Activated B cell treated with CpG ODN at 0.5 μM for 24 hours (primary cell): ENCODE measurements at regions of chr9 and their contacts with region 1.

Region 1: GRCh38 chr9:4762108-4762885 is 21.3 kb upstream of the AK3 start:
- DNase-seq: peak; percentile 61
- ATAC-seq: peak; percentile 70
- H3K4me3 Mint-ChIP-seq: peak overlapping the region; percentile 72
- H3K27ac Mint-ChIP-seq: peak overlapping the region; percentile 54
- H3K4me1 Mint-ChIP-seq: peaks cover 24% of the 10 kb centered on the region
- H3K27me3 Mint-ChIP-seq: no peaks in the 10 kb centered on the region
- CTCF ChIP-seq: no peak

Region 2: DNA sequence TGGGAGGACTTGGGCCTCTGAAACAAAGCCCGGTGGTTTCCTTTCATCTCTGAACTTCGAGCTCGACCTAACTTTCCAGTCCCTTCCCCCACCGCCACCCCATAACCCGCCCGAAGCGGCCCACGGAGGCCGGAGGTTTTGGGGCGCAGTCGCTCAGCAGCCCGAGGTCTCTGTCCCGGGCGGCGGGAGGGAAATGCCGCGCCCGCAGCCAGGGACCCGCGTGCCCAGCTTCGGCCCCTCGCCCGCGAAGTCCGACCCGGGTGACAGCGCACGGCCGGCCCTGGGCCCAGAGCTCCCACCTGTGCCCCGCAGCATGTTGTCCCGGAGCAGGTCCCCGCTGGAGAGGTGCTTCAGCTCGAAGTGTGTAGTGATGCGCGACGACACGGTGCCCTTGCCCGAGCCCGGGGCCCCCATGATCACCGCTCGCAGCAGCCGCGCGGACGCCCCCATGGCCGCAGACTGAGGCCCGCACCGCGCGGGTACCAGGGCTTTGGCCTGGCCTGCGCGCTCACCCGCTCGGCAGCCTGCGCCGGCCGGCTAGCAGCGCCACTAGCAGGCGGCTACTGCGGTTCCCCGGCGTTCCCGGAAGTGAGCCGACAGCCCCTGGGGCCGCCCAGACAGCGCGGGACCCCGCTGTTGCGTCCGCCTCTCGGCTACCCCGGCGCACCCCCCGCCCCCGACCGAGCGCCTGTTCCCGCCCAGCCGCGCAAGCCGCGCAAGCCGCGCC is 21.5 kb before region 1 on chr9 and contains the start of gene AK3:
- CTCF ChIA-PET with region 1: interaction called, 6 read pairs
- POLR2A ChIA-PET with region 1: interaction called, 4 read pairs
- intact Hi-C with region 1: loop called (anchors 1 kb)
- DNase-seq: peak; percentile 79
- ATAC-seq: peak; percentile 93
- H3K4me3 Mint-ChIP-seq: peak within 1 kb of the TSS; percentile 90
- H3K27ac Mint-ChIP-seq: peak within 1 kb of the TSS; percentile 83
- H3K4me1 Mint-ChIP-seq: peaks cover 30% of the 10 kb centered on the region
- H3K27me3 Mint-ChIP-seq: no peaks in the 10 kb centered on the region
- CTCF ChIP-seq: no peak
- total RNA-seq, gene AK3: 14.5 and 16.9 TPM in 2 replicates

Region 3: DNA sequence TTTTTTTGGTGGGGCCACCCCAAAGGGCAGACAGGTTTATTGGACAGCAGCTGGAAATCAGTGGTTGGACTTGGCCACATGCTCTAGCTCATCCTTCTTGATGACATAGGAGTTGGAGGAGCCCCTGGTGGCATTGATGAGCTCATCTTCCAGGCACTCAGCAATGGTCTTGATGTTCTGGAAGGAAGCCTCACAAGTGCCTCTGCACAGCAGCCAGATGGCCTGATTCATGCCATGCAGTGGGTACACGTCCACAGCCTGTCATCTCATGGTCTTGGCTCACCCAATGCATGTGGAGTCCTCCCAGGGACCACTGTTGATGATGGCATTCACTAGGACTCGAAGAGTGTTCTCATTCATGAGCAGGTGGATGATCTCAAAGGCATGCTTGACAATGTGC is 19.1 kb after region 1 on chr9:
- CTCF ChIA-PET with region 1: interaction called, 4 read pairs
- POLR2A ChIA-PET with region 1: interaction called, 11 read pairs
- intact Hi-C with region 1: no loop called
- DNase-seq: no peak
- ATAC-seq: no peak
- H3K4me3 Mint-ChIP-seq: no peak overlapping the region
- H3K27ac Mint-ChIP-seq: no peak overlapping the region
- H3K4me1 Mint-ChIP-seq: no peaks in the 10 kb centered on the region
- H3K27me3 Mint-ChIP-seq: peaks cover 8% of the 10 kb centered on the region
- CTCF ChIP-seq: no peak

Region 4: DNA sequence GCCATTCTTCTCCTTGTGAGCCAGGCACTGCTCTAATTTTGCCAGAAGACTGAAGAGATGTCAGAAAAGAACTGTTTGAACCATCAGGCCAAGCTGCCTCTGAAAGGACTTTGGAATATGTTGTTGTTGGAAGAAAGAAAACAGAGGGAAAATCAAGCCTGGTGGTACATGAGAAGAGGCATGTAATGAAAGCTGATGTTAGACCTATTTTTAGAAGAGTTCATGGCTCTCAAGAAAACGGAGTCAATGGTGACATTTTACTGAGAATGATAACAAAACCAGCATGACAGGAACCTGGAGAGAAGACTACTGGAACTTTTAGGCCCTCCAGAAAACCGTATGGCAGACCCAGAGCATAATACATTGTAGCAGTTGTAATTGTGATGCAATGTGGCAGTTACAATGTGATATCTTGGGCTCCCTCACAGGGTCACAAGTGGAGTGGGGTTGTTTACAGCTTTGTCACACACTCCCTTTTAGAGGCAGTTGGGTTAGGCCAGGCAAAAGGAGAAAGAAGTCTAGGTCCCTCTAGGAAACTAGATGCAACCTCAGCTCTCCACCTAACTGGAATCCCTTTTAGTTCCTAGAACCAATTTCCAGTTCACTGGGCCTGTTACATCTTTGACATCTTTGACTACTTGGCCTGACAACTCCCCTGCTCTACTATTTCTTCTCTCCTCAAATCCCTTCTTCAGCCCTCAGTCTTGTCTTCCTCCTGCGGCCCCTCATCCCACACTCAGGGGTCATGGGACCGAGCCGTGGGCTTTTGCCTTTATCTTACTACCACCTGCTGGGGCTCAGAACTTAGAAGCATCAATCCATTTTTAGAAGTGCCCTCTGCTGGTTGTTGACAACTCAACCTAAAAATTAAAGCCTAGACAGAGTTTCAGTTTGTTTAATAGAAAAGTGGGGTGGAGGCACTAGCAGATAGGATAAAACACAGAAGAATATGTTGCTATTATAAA is 161.6 kb after region 1 on chr9:
- CTCF ChIA-PET with region 1: interaction called, 52 read pairs
- POLR2A ChIA-PET with region 1: no interaction called
- intact Hi-C with region 1: loop called (anchors 1 kb)
- DNase-seq: no peak
- ATAC-seq: peak; percentile 52
- H3K4me3 Mint-ChIP-seq: no peak overlapping the region
- H3K27ac Mint-ChIP-seq: no peak overlapping the region
- H3K4me1 Mint-ChIP-seq: peaks cover 11% of the 10 kb centered on the region
- H3K27me3 Mint-ChIP-seq: no peaks in the 10 kb centered on the region
- CTCF ChIP-seq: no peak

Region 5: DNA sequence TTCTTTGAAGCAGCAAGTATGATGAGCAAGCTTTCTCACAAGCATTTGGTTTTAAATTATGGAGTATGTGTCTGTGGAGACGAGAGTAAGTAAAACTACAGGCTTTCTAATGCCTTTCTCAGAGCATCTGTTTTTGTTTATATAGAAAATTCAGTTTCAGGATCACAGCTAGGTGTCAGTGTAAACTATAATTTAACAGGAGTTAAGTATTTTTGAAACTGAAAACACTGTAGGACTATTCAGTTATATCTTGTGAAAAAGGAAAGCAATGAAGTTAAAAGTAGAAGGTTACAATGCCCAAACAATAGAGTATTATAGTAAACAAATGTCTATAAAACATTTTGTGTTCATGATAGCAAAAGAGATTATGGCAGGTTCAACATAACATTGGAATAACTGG is 311.4 kb after region 1 on chr9:
- CTCF ChIA-PET with region 1: no interaction called
- POLR2A ChIA-PET with region 1: no interaction called
- intact Hi-C with region 1: loop called (anchors 5 kb)
- DNase-seq: no peak
- ATAC-seq: no peak
- H3K4me3 Mint-ChIP-seq: no peak overlapping the region
- H3K27ac Mint-ChIP-seq: no peak overlapping the region
- H3K4me1 Mint-ChIP-seq: no peaks in the 10 kb centered on the region
- H3K27me3 Mint-ChIP-seq: no peaks in the 10 kb centered on the region
- CTCF ChIP-seq: no peak

Region 6: GRCh38 chr9:5263351-5264218 is 501.3 kb after region 1 on chr9:
- CTCF ChIA-PET with region 1: interaction called, 3 read pairs
- POLR2A ChIA-PET with region 1: no interaction called
- intact Hi-C with region 1: loop called (anchors 1 kb)
- DNase-seq: no peak
- ATAC-seq: no peak
- H3K4me3 Mint-ChIP-seq: no peak overlapping the region
- H3K27ac Mint-ChIP-seq: no peak overlapping the region
- H3K4me1 Mint-ChIP-seq: no peaks in the 10 kb centered on the region
- H3K27me3 Mint-ChIP-seq: no peaks in the 10 kb centered on the region
- CTCF ChIP-seq: no peak

Region 7: DNA sequence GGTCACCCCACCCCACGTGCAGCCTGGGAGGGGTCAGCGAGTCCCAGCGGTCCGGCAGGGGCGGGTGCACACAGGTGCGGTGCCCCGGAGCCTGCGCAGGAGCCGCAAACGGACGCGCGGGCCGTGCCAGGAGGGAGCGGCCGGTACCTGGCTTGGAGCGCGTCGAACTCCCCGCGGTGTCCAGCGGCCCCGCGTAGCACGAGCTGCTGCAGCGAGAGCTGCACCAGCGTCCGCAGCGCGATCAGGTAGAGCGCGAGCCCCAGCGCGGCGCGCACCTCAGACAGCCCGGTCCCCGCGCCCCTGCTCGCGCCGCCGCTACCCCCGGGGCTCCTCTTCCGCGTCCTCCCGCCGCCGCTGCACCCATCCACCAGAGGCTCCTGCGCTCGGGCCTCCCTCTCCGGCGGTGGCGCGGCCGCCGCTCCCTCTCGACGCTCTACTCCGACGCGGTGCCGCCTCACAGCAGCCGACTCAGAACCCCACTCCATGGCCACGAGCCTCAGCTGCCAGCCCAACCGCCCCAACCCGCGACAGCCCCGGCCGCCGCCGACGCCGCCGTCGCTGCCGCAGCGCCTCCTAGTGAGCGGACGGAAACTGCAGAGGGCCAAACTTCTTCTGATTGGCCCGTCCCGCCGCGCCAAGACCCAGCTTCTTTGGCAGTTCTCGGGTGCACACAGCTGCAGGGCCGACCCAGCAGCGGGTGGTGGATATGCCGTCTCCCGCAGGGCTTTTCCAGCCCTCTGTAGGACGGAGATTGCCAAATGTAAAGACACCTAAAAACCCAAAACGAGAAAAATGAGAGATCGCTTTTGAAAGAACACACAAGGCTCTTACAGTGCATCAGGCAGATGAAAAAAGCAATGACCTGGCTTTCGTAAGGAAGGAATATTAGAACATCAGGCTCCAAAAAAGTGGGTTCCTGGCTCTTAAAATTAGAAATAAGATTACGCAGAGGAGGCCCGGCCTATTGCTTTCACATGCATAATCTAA is 1070.5 kb after region 1 on chr9 and contains the start of gene ERMP1:
- CTCF ChIA-PET with region 1: interaction called, 3 read pairs
- POLR2A ChIA-PET with region 1: no interaction called
- intact Hi-C with region 1: loop called (anchors 5 kb)
- DNase-seq: peak; percentile 88
- ATAC-seq: peak; percentile 88
- H3K4me3 Mint-ChIP-seq: peak within 1 kb of the TSS; percentile 90
- H3K27ac Mint-ChIP-seq: peak within 1 kb of the TSS; percentile 83
- H3K4me1 Mint-ChIP-seq: peaks cover 33% of the 10 kb centered on the region
- H3K27me3 Mint-ChIP-seq: no peaks in the 10 kb centered on the region
- CTCF ChIP-seq: peak; percentile 22
- total RNA-seq, gene ERMP1: 7.3 and 7.5 TPM in 2 replicates